ENCODE measurements at regions of chr11 and their contacts with region 1.

Region 1: DNA sequence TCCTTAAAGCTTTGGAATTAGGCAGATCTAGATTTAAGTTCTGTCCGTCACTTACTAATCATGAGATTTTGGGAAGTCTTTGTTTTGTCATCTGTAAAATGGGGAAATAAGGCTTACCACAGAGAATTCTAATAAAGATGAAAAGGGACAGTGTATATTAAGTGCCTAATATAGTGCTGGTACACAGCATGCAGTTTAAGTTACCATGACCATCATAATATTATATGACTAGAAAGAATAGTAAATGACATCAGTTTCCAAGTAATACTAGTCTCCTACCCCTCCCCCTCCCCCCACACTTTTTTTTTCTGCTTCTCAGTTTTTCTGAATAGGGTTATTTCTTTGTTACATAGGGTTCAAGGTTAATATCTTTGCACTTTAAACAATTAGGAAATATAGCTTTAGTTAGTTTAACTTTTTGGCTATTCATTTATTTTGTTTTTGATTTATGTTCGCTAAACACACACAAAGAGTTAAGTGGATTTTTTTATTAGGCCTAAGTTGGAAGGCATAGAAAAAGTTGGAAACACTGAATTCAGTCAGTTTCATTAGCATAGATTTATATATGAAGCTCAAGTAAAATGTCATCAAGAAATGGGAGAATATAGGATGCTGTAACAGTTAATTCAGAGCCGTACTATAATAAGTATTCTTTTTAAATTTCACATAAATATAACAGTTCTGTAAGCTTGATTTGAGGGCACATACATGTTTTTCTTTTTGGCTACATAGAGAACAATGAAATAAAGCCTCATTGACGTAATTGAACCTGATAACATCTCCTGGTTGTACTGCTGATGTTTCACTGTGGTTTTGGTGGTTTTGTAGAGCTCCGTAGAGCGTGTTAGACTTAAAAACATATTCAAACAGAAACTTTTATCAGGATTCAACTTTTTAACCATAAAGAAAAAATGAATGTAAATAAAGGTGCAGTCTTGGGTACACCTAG is 121.2 kb downstream of the PDE3B start:
- DNase-seq: peak; percentile 65
- ATAC-seq: peak; percentile 91
- H3K4me3 ChIP-seq: no peak overlapping the region
- H3K27ac ChIP-seq: peak overlapping the region; percentile 6; the same call in 1 of the 2 replicates
- H3K4me1 ChIP-seq: peaks cover 12% of the 10 kb centered on the region; the same call in 1 of the 2 replicates
- H3K27me3 ChIP-seq: peaks cover 0 to 3% of the 10 kb centered on the region in 2 experiments; a peak in 1 of 4 replicates
- CTCF ChIP-seq: no peak
- EP300 ChIP-seq: peak; percentile 97 to 98; a peak in 3 of 4 replicates
- POLR2A ChIP-seq: no peak
- RAD21 ChIP-seq: no peak

Region 2: DNA sequence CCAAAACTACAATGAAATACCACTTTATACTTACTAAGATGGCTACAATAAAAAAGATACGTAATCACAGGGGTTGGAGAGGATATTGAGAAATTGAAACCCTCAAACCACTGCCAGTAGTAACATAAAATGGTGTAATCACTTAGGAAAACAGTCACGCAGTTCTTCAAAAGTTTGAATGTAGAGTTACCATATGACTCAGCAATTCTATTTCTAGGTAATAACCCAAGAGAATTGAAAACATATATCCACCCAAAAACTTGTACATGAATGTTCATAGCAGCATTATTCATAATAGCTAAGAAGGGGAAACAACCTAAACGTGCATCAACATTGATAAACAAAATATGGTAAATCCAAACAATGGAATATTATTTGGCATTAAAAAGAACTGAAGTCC is 220.2 kb before region 1 on chr11:
- CTCF ChIA-PET with region 1: interaction called, 3 read pairs
- POLR2A ChIA-PET with region 1: no interaction called
- RAD21 ChIA-PET with region 1: no interaction called
- SMC1A ChIA-PET with region 1: no interaction called
- in situ Hi-C with region 1: loop called (anchors 25 kb)
- intact Hi-C with region 1: loop called (anchors 2 kb)
- DNase-seq: peak; percentile 17
- ATAC-seq: peak; percentile 90
- H3K4me3 ChIP-seq: no peak overlapping the region
- H3K27ac ChIP-seq: no peak overlapping the region
- H3K4me1 ChIP-seq: no peaks in the 10 kb centered on the region
- H3K27me3 ChIP-seq: no peaks in the 10 kb centered on the region
- CTCF ChIP-seq: no peak
- EP300 ChIP-seq: peak in 1 of 2 experiments; percentile 50; a peak in 1 of 4 replicates
- POLR2A ChIP-seq: no peak
- RAD21 ChIP-seq: no peak

Region 3: GRCh38 chr11:14892036-14892567 is 127.2 kb after region 1 on chr11 and contains the start of gene CYP2R1:
- CTCF ChIA-PET with region 1: no interaction called
- POLR2A ChIA-PET with region 1: no interaction called
- RAD21 ChIA-PET with region 1: no interaction called
- SMC1A ChIA-PET with region 1: no interaction called
- in situ Hi-C with region 1: no loop called
- intact Hi-C with region 1: loop called (anchors 5 kb)
- DNase-seq: peak; percentile 84
- ATAC-seq: peak; percentile 95
- H3K4me3 ChIP-seq: peak within 1 kb of the TSS; percentile 51
- H3K27ac ChIP-seq: peak within 1 kb of the TSS; percentile 65
- H3K4me1 ChIP-seq: peaks cover 4% of the 10 kb centered on the region; the same call in 1 of the 2 replicates
- H3K27me3 ChIP-seq: no peaks in the 10 kb centered on the region
- CTCF ChIP-seq: no peak
- EP300 ChIP-seq: no peak
- POLR2A ChIP-seq: no peak
- RAD21 ChIP-seq: no peak
- polyA plus RNA-seq, gene CYP2R1: 4.9 to 9.0 TPM